ENCODE measurements at regions of chr2 and their contacts with region 1.

Region 1: DNA sequence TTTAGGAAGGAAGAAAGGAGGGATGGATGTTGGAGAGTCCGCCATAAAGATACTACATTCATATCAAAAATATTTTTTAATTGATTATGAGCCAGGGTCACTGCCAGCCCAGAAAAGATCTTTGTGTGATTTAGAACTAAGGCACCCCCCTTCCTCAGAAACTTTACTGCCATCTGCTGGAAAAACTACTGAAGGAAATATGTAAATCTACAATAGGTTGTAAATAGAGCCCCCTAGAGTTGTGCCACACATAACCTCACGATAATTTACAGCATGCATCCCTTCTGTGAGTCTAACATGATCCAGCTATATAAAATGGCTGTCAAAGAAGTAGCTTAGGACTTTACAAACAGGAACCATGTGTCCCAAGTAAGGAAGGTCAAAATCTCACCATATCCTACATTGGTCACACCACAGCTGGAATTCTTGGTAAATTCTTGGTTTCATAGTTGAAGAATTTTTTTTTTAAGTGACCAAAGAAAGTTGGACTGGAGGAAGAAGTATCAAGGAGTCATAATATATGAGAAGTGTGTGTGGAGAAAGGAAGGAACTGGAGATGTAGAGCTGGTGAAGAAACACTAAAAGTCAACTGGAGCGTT is 152.5 kb downstream of the CYP26B1 start:
- DNase-seq: no peak
- H3K4me3 Mint-ChIP-seq: no peak overlapping the region
- H3K27ac Mint-ChIP-seq: no peak overlapping the region
- H3K4me1 Mint-ChIP-seq: no peaks in the 10 kb centered on the region
- H3K27me3 Mint-ChIP-seq: peaks cover 71% of the 10 kb centered on the region
- CTCF ChIP-seq: no peak

Region 2: GRCh38 chr2:71545572-71546274 is 449.4 kb before region 1 on chr2:
- CTCF ChIA-PET with region 1: no interaction called
- intact Hi-C with region 1: loop called (anchors 5 kb)
- DNase-seq: peak; percentile 59
- H3K4me3 Mint-ChIP-seq: peak overlapping the region; percentile 54
- H3K27ac Mint-ChIP-seq: no peak overlapping the region
- H3K4me1 Mint-ChIP-seq: peaks cover 17% of the 10 kb centered on the region
- H3K27me3 Mint-ChIP-seq: peaks cover 64% of the 10 kb centered on the region
- CTCF ChIP-seq: peak; percentile 74

Measured in Calu3 (cell line).